Endothelial cell of umbilical vein (primary cell): ENCODE measurements at regions of chr19 and their contacts with region 1.

Region 1: DNA sequence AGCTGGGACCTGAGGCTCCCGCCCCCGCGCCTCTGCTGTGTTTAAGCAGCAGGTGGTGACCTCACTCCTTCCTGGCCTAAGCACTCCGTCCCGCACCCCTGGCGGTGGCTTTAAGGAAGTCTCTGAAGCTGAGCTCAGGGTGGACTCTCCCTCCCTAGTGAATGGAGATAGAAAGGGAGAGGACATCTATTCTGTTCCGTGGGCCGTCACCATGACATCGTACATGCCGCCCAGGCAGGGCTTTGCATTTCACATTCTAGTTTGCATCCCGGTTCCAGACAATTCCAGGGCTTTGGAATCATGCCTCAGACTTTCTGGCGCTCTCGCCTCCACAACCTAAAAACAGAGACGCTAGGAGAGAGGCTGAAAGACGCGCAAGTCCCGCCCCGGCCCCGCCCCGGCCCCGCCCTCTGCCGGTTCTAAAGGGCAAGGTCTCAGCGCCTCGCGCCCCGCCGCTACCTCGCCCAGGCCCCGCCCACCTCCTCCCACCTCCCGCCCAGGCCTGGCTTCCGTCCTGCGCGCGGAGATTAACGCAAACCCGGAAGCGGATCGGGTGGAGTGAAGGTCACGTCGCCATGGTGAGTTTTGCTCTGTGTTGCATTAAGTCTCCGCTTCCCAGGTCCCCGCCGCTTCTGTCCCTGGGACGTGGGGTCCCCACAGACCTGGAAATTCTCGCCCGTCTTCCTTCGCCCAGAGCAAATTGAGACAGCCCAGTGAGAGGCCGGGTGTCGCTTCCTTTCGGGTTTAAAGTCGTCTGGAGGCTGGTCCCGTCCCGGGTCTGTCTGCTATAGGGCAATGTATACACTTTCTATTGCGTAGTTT is at the start of gene ZNF808:
- DNase-seq: peak; percentile 88
- H3K4me3 ChIP-seq: peak within 1 kb of the TSS; percentile 70 to 86 (median 83)
- H3K27ac ChIP-seq: peak within 1 kb of the TSS; percentile 78
- H3K4me1 ChIP-seq: peaks cover 3% of the 10 kb centered on the region
- H3K27me3 ChIP-seq: no peaks in the 10 kb centered on the region
- CTCF ChIP-seq: peak; percentile 59 to 61
- POLR2A ChIP-seq: peak; percentile 78
- total RNA-seq, gene ZNF808: 13.6 and 15.2 TPM in 2 replicates

Region 2: GRCh38 chr19:52139252-52140031 is 387.9 kb before region 1 on chr19 and contains the start of gene ZNF616:
- CTCF ChIA-PET with region 1: no interaction called
- POLR2A ChIA-PET with region 1: no interaction called
- dilution Hi-C with region 1: no loop called
- intact Hi-C with region 1: loop called (anchors 2 kb)
- DNase-seq: peak; percentile 95
- H3K4me3 ChIP-seq: peak within 1 kb of the TSS; percentile 55 to 88 (median 72)
- H3K27ac ChIP-seq: peak within 1 kb of the TSS; percentile 66
- H3K4me1 ChIP-seq: peaks cover 6% of the 10 kb centered on the region
- H3K27me3 ChIP-seq: no peaks in the 10 kb centered on the region
- CTCF ChIP-seq: peak; percentile 59 to 77
- POLR2A ChIP-seq: peak; percentile 78
- total RNA-seq, gene ZNF616: 8.7 and 9.1 TPM in 2 replicates

Region 3: GRCh38 chr19:52296773-52297600 is 230.4 kb before region 1 on chr19 and contains the start of gene ZNF480:
- CTCF ChIA-PET with region 1: no interaction called
- POLR2A ChIA-PET with region 1: no interaction called
- dilution Hi-C with region 1: no loop called
- intact Hi-C with region 1: loop called (anchors 1 kb)
- DNase-seq: peak; percentile 75
- H3K4me3 ChIP-seq: peak within 1 kb of the TSS; percentile 64 to 97 (median 97)
- H3K27ac ChIP-seq: peak within 1 kb of the TSS; percentile 97
- H3K4me1 ChIP-seq: peaks cover 4% of the 10 kb centered on the region
- H3K27me3 ChIP-seq: no peaks in the 10 kb centered on the region
- CTCF ChIP-seq: peak in 1 of 2 donors; percentile 14
- POLR2A ChIP-seq: peak; percentile 83
- total RNA-seq, gene ZNF480: 9.2 and 10.0 TPM in 2 replicates

Region 4: GRCh38 chr19:52554216-52554971 is 27.0 kb after region 1 on chr19:
- CTCF ChIA-PET with region 1: no interaction called
- POLR2A ChIA-PET with region 1: no interaction called
- dilution Hi-C with region 1: no loop called
- intact Hi-C with region 1: no loop called
- DNase-seq: no peak
- H3K4me3 ChIP-seq: no peak overlapping the region
- H3K27ac ChIP-seq: no peak overlapping the region
- H3K4me1 ChIP-seq: no peaks in the 10 kb centered on the region
- H3K27me3 ChIP-seq: no peaks in the 10 kb centered on the region
- CTCF ChIP-seq: no peak
- POLR2A ChIP-seq: no peak

Region 5: GRCh38 chr19:52570000-52570861 is 42.9 kb after region 1 on chr19 and contains the start of gene ZNF701:
- CTCF ChIA-PET with region 1: no interaction called
- POLR2A ChIA-PET with region 1: no interaction called
- dilution Hi-C with region 1: no loop called
- intact Hi-C with region 1: loop called (anchors 1 kb)
- DNase-seq: peak; percentile 95
- H3K4me3 ChIP-seq: peak within 1 kb of the TSS; percentile 32 to 81 (median 64)
- H3K27ac ChIP-seq: peak within 1 kb of the TSS; percentile 75
- H3K4me1 ChIP-seq: no peaks in the 10 kb centered on the region
- H3K27me3 ChIP-seq: no peaks in the 10 kb centered on the region
- CTCF ChIP-seq: peak in 1 of 2 donors; percentile 18
- POLR2A ChIP-seq: peak; percentile 96
- total RNA-seq, gene ZNF701: 12.1 and 12.3 TPM in 2 replicates

Region 6: GRCh38 chr19:52637718-52638585 is 110.6 kb after region 1 on chr19 and contains the start of gene ZNF83:
- CTCF ChIA-PET with region 1: no interaction called
- POLR2A ChIA-PET with region 1: no interaction called
- dilution Hi-C with region 1: no loop called
- intact Hi-C with region 1: loop called (anchors 2 kb)
- DNase-seq: peak; percentile 95
- H3K4me3 ChIP-seq: peak within 1 kb of the TSS; percentile 63 to 79 (median 72)
- H3K27ac ChIP-seq: peak within 1 kb of the TSS; percentile 56
- H3K4me1 ChIP-seq: peaks cover 10% of the 10 kb centered on the region
- H3K27me3 ChIP-seq: no peaks in the 10 kb centered on the region
- CTCF ChIP-seq: no peak
- POLR2A ChIP-seq: peak; percentile 94
- total RNA-seq, gene ZNF83: 39.3 and 41.4 TPM in 2 replicates

Region 7: GRCh38 chr19:52690369-52691214 is 163.2 kb after region 1 on chr19:
- CTCF ChIA-PET with region 1: no interaction called
- POLR2A ChIA-PET with region 1: no interaction called
- dilution Hi-C with region 1: no loop called
- intact Hi-C with region 1: loop called (anchors 1 kb)
- DNase-seq: peak; percentile 94
- H3K4me3 ChIP-seq: peak overlapping the region; percentile 88 to 97 (median 93)
- H3K27ac ChIP-seq: peak overlapping the region; percentile 88
- H3K4me1 ChIP-seq: peaks cover 9% of the 10 kb centered on the region
- H3K27me3 ChIP-seq: no peaks in the 10 kb centered on the region
- CTCF ChIP-seq: peak in 1 of 2 donors; percentile 5
- POLR2A ChIP-seq: peak; percentile 89